Right ventricle myocardium inferior (tissue), 1 donor: ENCODE measurements at regions of chr18 and their contacts with region 1.

Region 1: GRCh38 chr18:55869556-55870501 is 281.8 kb upstream of the TCF4 start:
- DNase-seq: no peak
- ATAC-seq: peak; percentile 86

Region 2: GRCh38 chr18:55672574-55673361 is 197.1 kb before region 1 on chr18:
- intact Hi-C with region 1: no loop called
- DNase-seq: no peak
- ATAC-seq: peak; percentile 54

Region 3: GRCh38 chr18:55763298-55763697 is 106.5 kb before region 1 on chr18:
- intact Hi-C with region 1: no loop called
- DNase-seq: no peak
- ATAC-seq: no peak

Region 4: GRCh38 chr18:55907453-55908175 is 37.8 kb after region 1 on chr18:
- intact Hi-C with region 1: no loop called
- DNase-seq: no peak
- ATAC-seq: no peak

Region 5: GRCh38 chr18:56083097-56083521 is 213.3 kb after region 1 on chr18:
- intact Hi-C with region 1: loop called (anchors 5 kb)
- DNase-seq: peak; percentile 57
- ATAC-seq: peak; percentile 77

Region 6: GRCh38 chr18:56175330-56176001 is 305.6 kb after region 1 on chr18:
- intact Hi-C with region 1: no loop called
- DNase-seq: no peak
- ATAC-seq: no peak